ENCODE measurements at regions of chr1 and their contacts with region 1.

Region 1: GRCh38 chr1:228486596-228487335 is 416 bp upstream of the RNF187 start:
- DNase-seq: peak; percentile 71 to 87
- ATAC-seq: peak; percentile 76 to 88 (median 77)
- H3K4me3 ChIP-seq: peak overlapping the region; percentile 92
- H3K4me3 Mint-ChIP-seq: peak overlapping the region; percentile 98
- H3K27ac ChIP-seq: peak overlapping the region; percentile 100
- H3K27ac Mint-ChIP-seq: peak overlapping the region; percentile 98 to 99
- H3K4me1 ChIP-seq: peaks cover 26% of the 10 kb centered on the region
- H3K4me1 Mint-ChIP-seq: peaks cover 16 to 37% of the 10 kb centered on the region in 2 donors
- H3K27me3 ChIP-seq: no peaks in the 10 kb centered on the region
- H3K27me3 Mint-ChIP-seq: no peaks in the 10 kb centered on the region
- CTCF ChIP-seq: no peak

Region 2: GRCh38 chr1:228464487-228464983 is 22.2 kb before region 1 on chr1:
- intact Hi-C with region 1: loop called (anchors 2 kb)
- DNase-seq: peak; percentile 71 to 94
- ATAC-seq: peak; percentile 92 to 93 (median 93)
- H3K4me3 ChIP-seq: peak overlapping the region; percentile 30
- H3K4me3 Mint-ChIP-seq: peak overlapping the region; percentile 92
- H3K27ac ChIP-seq: peak overlapping the region; percentile 25
- H3K27ac Mint-ChIP-seq: peak overlapping the region; percentile 79 to 81
- H3K4me1 ChIP-seq: peaks cover 31% of the 10 kb centered on the region
- H3K4me1 Mint-ChIP-seq: peaks cover 42 to 43% of the 10 kb centered on the region in 2 donors
- H3K27me3 ChIP-seq: peaks cover 8% of the 10 kb centered on the region
- H3K27me3 Mint-ChIP-seq: peaks cover 22 to 25% of the 10 kb centered on the region in 2 donors
- CTCF ChIP-seq: no peak

Measured in natural killer cell (primary cell).